Esophagus squamous epithelium (tissue), 5 donors: ENCODE measurements at regions of chr2 and their contacts with region 1.

Region 1: GRCh38 chr2:127362971-127363370 is 24.8 kb downstream of the MAP3K2 start:
- DNase-seq: no peak
- H3K4me3 ChIP-seq: no peak overlapping the region
- H3K27ac ChIP-seq: no peak overlapping the region
- H3K4me1 ChIP-seq: peaks cover 0 to 19% (median 3%) of the 10 kb centered on the region in 3 donors
- H3K27me3 ChIP-seq: no peaks in the 10 kb centered on the region
- CTCF ChIP-seq: no peak
- POLR2A ChIP-seq: no peak

Region 2: GRCh38 chr2:127424598-127425379 is 61.8 kb after region 1 on chr2:
- intact Hi-C with region 1: loop called (anchors 5 kb)
- DNase-seq: no peak
- H3K4me3 ChIP-seq: no peak overlapping the region
- H3K27ac ChIP-seq: no peak overlapping the region
- H3K4me1 ChIP-seq: peaks cover 12 to 20% (median 14%) of the 10 kb centered on the region in 3 donors
- H3K27me3 ChIP-seq: peaks cover 0 to 74% (median 3%) of the 10 kb centered on the region in 4 donors
- CTCF ChIP-seq: no peak
- POLR2A ChIP-seq: no peak